ENCODE measurements at regions of chr1 and their contacts with region 1.

Region 1: DNA sequence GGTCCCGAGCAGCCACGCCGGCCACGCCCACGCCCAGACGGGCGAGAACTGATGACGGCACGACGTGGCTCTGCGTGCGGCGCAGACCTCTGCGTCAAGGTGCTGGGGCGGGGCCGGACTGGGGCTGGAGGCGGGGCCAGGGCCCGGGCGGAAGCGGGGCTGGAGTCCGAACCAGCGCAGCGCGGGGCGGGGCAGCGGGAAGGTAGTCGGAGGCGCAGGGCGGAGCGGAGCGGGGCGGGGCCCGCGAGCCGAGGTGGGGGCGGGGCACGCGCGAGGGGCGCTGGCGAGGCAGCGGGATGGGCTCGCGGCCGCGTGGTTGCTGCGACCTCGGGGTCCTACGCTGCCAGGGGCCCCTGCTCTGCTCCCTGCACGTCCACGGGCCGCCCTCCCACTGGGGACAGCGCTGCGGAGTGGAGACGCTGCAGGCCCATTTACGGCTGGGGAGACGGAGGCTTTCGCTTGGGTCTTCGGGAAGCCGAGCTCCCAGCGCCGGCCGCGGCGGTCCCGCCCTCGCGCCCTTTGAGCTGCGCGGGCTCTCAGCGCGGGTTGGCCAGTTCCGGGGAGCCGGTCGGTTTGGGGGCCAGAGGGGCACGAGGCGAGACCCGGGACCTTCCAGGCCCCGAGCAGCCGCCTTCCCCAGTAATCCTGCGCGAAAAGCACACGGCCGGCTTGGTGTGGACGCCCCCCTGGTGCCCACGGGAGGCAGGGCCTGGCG is at the start of gene PEX10:
- DNase-seq: peak; percentile 99
- H3K4me3 ChIP-seq: peak within 1 kb of the TSS; percentile 91
- H3K27ac ChIP-seq: peak within 1 kb of the TSS; percentile 56
- H3K4me1 ChIP-seq: no peaks in the 10 kb centered on the region
- H3K27me3 ChIP-seq: no peaks in the 10 kb centered on the region
- total RNA-seq, gene PEX10: 51.3 and 59.1 TPM in 2 replicates

Region 2: GRCh38 chr1:2545759-2546514 is 133.3 kb after region 1 on chr1:
- in situ Hi-C with region 1: loop called (anchors 10 kb)
- DNase-seq: peak; percentile 73
- H3K4me3 ChIP-seq: peak overlapping the region; percentile 68
- H3K27ac ChIP-seq: no peak overlapping the region
- H3K4me1 ChIP-seq: peaks cover 10% of the 10 kb centered on the region
- H3K27me3 ChIP-seq: no peaks in the 10 kb centered on the region

Region 3: GRCh38 chr1:3012456-3013291 is 600.0 kb after region 1 on chr1:
- in situ Hi-C with region 1: loop called (anchors 25 kb)
- DNase-seq: peak; percentile 43
- H3K4me3 ChIP-seq: no peak overlapping the region
- H3K27ac ChIP-seq: no peak overlapping the region
- H3K4me1 ChIP-seq: no peaks in the 10 kb centered on the region
- H3K27me3 ChIP-seq: peaks cover 13% of the 10 kb centered on the region

Region 4: GRCh38 chr1:3423245-3423829 is 1010.7 kb after region 1 on chr1:
- in situ Hi-C with region 1: loop called (anchors 10 kb)
- DNase-seq: no peak
- H3K4me3 ChIP-seq: no peak overlapping the region
- H3K27ac ChIP-seq: no peak overlapping the region
- H3K4me1 ChIP-seq: no peaks in the 10 kb centered on the region
- H3K27me3 ChIP-seq: peaks cover 36% of the 10 kb centered on the region

Measured in GM23248 (cell line).